Natural killer cell (primary cell): ENCODE measurements at regions of chr10 and their contacts with region 1.

Region 1: GRCh38 chr10:26890956-26891355 is 30.2 kb upstream of the ABI1 start:
- DNase-seq: peak in 1 of 2 donors; percentile 54
- ATAC-seq: peak in 2 of 3 donors; percentile 32 to 43
- H3K4me3 ChIP-seq: no peak overlapping the region
- H3K4me3 Mint-ChIP-seq: no peak overlapping the region
- H3K27ac ChIP-seq: no peak overlapping the region
- H3K27ac Mint-ChIP-seq: no peak overlapping the region
- H3K4me1 ChIP-seq: no peaks in the 10 kb centered on the region
- H3K4me1 Mint-ChIP-seq: no peaks in the 10 kb centered on the region
- H3K27me3 ChIP-seq: no peaks in the 10 kb centered on the region
- H3K27me3 Mint-ChIP-seq: peaks cover 14 to 24% of the 10 kb centered on the region in 2 donors
- CTCF ChIP-seq: no peak

Region 2: GRCh38 chr10:27360581-27361172 is 469.7 kb after region 1 on chr10:
- intact Hi-C with region 1: loop called (anchors 2 kb)
- DNase-seq: peak; percentile 74 to 93
- ATAC-seq: peak; percentile 89 to 99 (median 99)
- H3K4me3 ChIP-seq: no peak overlapping the region
- H3K4me3 Mint-ChIP-seq: no peak overlapping the region
- H3K27ac ChIP-seq: no peak overlapping the region
- H3K27ac Mint-ChIP-seq: no peak overlapping the region
- H3K4me1 ChIP-seq: no peaks in the 10 kb centered on the region
- H3K4me1 Mint-ChIP-seq: peaks cover 0 to 5% of the 10 kb centered on the region in 2 donors
- H3K27me3 ChIP-seq: no peaks in the 10 kb centered on the region
- H3K27me3 Mint-ChIP-seq: peaks cover 0 to 6% of the 10 kb centered on the region in 2 donors
- CTCF ChIP-seq: peak; percentile 92